Right lobe of liver (tissue), 6 donors: ENCODE measurements at regions of chr11 and their contacts with region 1.

Region 1: DNA sequence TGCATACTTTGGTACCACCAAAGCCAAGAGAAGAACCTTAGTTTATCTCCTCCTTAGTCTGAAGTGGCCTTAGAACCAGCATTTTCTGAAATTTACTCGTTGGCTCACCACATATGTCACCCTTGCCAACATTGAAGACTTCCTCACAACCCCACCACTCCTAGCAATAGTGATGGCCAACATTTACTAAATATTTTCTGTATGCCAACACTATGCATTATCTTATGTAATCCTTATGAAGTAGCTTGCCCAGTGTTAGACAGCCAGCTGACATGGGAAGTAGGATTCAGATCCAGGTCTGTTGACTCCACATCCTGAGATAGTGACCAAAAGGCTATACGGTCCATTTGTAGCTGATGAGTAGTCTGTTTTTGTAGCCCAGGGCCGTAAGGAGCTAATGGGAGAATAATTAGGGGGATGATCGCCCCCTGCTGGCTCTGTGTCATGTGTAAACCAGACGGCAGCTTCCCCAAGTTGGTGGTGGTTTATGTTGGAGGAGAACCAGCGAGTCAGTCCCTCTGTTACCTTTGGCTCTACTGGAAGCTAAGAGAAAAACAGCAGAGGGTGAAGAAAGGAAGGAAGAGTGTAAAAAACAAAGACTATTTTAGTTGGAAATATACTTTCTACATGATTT is 120.5 kb upstream of the RASSF10 start:
- DNase-seq: peak; percentile 77 to 85 (median 77)
- ATAC-seq: peak; percentile 95 to 97 (median 96)
- H3K4me3 ChIP-seq: no peak overlapping the region
- H3K27ac ChIP-seq: peak overlapping the region in 1 of 3 donors; percentile 7
- H3K4me1 ChIP-seq: peaks cover 0 to 5% (median 0%) of the 10 kb centered on the region in 4 donors
- H3K27me3 ChIP-seq: no peaks in the 10 kb centered on the region
- CTCF ChIP-seq: peak; percentile 62 to 81 (median 78)
- POLR2A ChIP-seq: no peak

Region 2: DNA sequence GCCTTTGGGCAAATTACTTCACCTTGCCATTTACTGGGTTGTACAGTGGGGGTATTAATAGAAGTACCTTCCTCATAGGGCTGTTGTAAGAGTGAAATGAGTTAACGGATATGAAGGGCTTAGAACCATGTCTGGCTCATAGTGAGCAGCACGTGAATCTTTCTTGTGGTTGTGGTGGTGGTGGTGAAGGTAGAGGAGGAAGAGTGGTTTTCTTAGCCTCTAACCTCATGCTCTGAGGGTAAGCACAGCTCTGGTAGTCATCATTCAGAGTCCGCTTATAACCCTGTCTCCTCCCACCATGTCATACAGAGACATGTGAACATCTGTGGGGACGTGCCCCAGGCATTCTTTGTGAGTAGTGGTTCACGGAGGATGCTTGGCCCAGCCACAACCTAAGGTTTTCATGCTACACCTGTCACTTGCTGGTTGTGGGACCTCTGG is 170.8 kb before region 1 on chr11:
- intact Hi-C with region 1: loop called in 1 of 2 experiments (anchors 10 kb)
- DNase-seq: no peak
- ATAC-seq: no peak
- H3K4me3 ChIP-seq: no peak overlapping the region
- H3K27ac ChIP-seq: no peak overlapping the region
- H3K4me1 ChIP-seq: peaks cover 0 to 10% (median 0%) of the 10 kb centered on the region in 4 donors
- H3K27me3 ChIP-seq: no peaks in the 10 kb centered on the region
- CTCF ChIP-seq: no peak
- POLR2A ChIP-seq: no peak